ENCODE measurements at regions of chr12 and their contacts with region 1.

Region 1: DNA sequence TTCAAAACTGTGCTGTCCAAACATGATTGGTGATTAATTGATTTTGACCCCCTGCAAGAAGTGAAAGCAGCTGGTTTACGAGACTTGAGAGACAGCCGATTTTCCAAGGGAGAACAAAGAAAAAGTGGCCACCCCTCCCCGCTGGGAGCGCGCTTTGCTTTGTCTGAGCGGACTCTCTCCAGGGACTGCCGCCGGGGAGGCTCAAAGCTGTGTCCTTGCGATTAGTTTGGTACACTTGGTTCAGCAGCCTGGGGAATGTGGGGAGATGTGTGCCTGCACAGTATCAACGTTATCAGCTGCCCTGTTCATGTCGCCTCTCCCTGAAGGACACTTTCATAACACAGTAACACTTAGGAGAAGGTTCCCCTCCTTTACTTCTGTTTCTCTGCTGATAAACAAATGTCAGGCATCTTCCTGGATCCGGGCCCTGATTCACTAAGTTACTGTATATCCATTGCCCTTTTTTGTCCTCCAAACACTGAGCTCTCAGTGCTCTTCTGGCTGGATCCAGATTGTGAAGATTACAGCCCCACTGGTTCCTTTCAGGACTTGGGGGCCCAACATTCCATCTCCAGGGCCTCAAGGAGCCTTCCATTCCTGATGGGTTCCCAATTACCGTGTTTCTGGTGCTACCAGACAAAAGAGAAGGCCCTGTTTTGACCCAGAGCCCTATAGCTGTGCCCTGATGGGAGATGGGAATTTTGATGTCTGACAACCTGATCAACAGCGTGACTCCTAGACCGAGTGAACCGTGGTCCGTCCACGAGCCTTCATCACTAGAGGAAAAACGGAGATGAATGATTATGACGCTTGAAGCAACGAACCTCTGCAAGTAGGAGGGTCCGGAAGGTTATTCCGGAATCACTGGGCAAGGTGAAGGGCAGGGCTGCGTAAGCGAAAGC is 31.7 kb upstream of the TUBA1C start:
- DNase-seq: peak; percentile 61
- H3K4me3 ChIP-seq: peak overlapping the region in 1 of 2 donors; percentile 1
- H3K27ac ChIP-seq: peak overlapping the region; percentile 87 to 98
- H3K4me1 ChIP-seq: peaks cover 7 to 8% of the 10 kb centered on the region in 2 donors
- H3K27me3 ChIP-seq: no peaks in the 10 kb centered on the region
- CTCF ChIP-seq: peak in 1 of 4 experiments; percentile 43
- POLR2A ChIP-seq: no peak

Region 2: GRCh38 chr12:48865434-48866290 is 367.5 kb before region 1 on chr12 and contains the start of gene RND1:
- intact Hi-C with region 1: no loop called
- DNase-seq: peak; percentile 85 to 92
- H3K4me3 ChIP-seq: peak within 1 kb of the TSS; percentile 43 to 62
- H3K27ac ChIP-seq: peak within 1 kb of the TSS; percentile 29 to 41
- H3K4me1 ChIP-seq: no peaks in the 10 kb centered on the region
- H3K27me3 ChIP-seq: no peaks in the 10 kb centered on the region
- CTCF ChIP-seq: peak in 3 of 4 experiments; percentile 7 to 26 (median 16)
- POLR2A ChIP-seq: peak; percentile 91 to 99
- total RNA-seq, gene RND1: 0.88 to 22.1 TPM in 2 of 4 donors, not detected in the others

Region 3: GRCh38 chr12:49130151-49131050 is 102.8 kb before region 1 on chr12:
- intact Hi-C with region 1: loop called (anchors 10 kb)
- DNase-seq: peak; percentile 94
- H3K4me3 ChIP-seq: peak overlapping the region; percentile 81 to 99
- H3K27ac ChIP-seq: peak overlapping the region; percentile 100
- H3K4me1 ChIP-seq: no peaks in the 10 kb centered on the region
- H3K27me3 ChIP-seq: no peaks in the 10 kb centered on the region
- CTCF ChIP-seq: peak; percentile 80 to 92 (median 89)
- POLR2A ChIP-seq: peak; percentile 47 to 79

Region 4: DNA sequence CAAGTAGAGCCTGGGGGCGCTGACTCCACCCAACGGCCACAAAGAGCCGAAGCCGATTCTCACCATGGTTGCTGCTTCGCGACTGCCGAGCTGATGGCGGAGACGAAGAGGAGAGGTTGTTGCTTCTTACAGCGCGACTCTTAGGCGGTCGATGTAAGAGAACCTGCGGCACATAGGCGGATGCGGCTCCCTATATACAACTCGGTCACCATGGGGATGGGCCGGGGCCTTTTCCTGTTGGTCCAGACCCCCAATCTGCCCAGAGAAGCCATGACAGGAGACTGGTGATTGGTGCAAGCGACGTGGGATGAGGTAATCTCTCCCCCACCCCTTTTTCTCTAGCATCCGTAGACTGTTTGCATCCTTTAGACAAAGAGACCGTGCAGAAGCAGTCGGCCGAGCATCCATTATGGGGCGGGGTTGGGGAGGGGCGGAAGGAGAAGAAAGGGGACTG is 44.2 kb before region 1 on chr12 and contains the start of gene TUBA1A:
- intact Hi-C with region 1: loop called (anchors 10 kb)
- DNase-seq: peak; percentile 93 to 99
- H3K4me3 ChIP-seq: peak within 1 kb of the TSS; percentile 86 to 100
- H3K27ac ChIP-seq: peak within 1 kb of the TSS; percentile 99
- H3K4me1 ChIP-seq: no peaks in the 10 kb centered on the region
- H3K27me3 ChIP-seq: no peaks in the 10 kb centered on the region
- CTCF ChIP-seq: peak in 1 of 4 experiments; percentile 21
- POLR2A ChIP-seq: peak; percentile 95 to 96
- total RNA-seq, gene TUBA1A: 241 to 900 (median 352) TPM

Measured in uterus (tissue), 4 donors.